ENCODE measurements at regions of chr10 and their contacts with region 1.

Region 1: DNA sequence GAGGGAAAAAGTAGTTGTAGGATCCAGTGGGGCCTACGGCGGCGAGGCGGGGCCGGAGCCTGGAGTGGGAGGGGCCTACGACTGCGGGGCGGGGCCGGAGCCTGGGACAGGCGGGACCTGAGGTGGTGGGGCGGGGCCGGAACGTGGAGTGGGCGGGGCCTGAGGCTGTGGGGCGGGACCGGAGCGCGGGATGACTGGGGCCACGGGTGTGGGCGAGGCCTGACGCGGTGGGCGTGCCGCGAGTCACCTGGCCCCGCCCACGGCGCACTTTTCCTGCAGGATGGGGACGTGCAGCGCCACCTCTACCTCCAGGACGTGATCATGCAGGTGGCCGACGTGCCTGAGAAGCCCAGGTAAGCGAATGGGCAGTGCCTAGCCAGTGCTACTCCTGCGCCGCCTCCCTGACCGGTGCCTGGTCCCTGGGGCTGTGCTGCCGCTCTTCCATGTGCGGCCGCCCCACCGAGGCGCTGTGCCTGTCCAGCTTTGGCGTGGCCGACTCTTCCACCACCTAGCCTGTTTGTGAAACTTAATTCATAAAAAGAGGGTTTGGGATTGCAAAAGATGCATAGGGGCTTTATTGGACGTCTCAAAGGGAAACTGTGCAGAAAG is 501 bp downstream of the ZNF511 start:
- DNase-seq: peak; percentile 93 to 99
- ATAC-seq: peak; percentile 97
- H3K4me3 ChIP-seq: peak overlapping the region; percentile 65 to 86
- H3K27ac ChIP-seq: peak overlapping the region in 1 of 2 donors; percentile 76
- H3K4me1 ChIP-seq: no peaks in the 10 kb centered on the region
- H3K27me3 ChIP-seq: no peaks in the 10 kb centered on the region

Region 2: GRCh38 chr10:133261726-133262325 is 47.4 kb before region 1 on chr10:
- intact Hi-C with region 1: loop called in 1 of 2 experiments (anchors 2 kb)
- DNase-seq: peak; percentile 95 to 97
- ATAC-seq: peak; percentile 82
- H3K4me3 ChIP-seq: peak overlapping the region; percentile 32 to 66
- H3K27ac ChIP-seq: no peak overlapping the region
- H3K4me1 ChIP-seq: no peaks in the 10 kb centered on the region
- H3K27me3 ChIP-seq: no peaks in the 10 kb centered on the region

Region 3: DNA sequence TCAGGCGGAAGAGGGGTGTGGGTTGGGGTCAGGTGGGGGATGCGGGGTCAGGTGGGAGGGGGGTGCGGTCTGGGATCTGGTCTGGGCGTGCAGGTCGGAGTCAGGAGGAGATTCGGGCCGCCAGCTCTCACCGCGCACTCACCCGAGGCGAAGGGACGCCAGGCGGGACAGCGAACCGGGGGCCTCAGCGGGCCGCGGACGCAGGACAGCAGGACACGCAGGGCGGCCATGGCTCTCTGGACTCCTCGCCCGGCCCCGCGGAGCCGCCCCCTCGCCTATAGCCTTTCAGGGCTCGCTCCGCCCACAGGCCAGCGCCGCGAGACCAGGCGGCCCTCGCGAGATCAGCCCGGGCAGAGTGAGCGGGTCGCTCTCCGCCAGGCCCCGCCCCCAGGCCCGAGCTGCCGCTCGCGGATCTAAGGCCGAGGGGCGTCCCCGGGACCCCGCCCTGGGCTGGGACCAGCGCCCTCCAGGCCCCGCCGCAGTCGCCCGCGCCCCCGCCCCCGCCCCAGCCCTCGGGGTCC is 63.9 kb after region 1 on chr10 and contains the start of gene ECHS1:
- intact Hi-C with region 1: loop called (anchors 5 kb)
- DNase-seq: peak; percentile 98 to 99
- ATAC-seq: peak; percentile 99
- H3K4me3 ChIP-seq: peak within 1 kb of the TSS; percentile 87 to 88
- H3K27ac ChIP-seq: peak within 1 kb of the TSS in 1 of 2 donors; percentile 61
- H3K4me1 ChIP-seq: no peaks in the 10 kb centered on the region
- H3K27me3 ChIP-seq: no peaks in the 10 kb centered on the region
- total RNA-seq, gene ECHS1: 34.3 to 48.9 TPM

Region 4: DNA sequence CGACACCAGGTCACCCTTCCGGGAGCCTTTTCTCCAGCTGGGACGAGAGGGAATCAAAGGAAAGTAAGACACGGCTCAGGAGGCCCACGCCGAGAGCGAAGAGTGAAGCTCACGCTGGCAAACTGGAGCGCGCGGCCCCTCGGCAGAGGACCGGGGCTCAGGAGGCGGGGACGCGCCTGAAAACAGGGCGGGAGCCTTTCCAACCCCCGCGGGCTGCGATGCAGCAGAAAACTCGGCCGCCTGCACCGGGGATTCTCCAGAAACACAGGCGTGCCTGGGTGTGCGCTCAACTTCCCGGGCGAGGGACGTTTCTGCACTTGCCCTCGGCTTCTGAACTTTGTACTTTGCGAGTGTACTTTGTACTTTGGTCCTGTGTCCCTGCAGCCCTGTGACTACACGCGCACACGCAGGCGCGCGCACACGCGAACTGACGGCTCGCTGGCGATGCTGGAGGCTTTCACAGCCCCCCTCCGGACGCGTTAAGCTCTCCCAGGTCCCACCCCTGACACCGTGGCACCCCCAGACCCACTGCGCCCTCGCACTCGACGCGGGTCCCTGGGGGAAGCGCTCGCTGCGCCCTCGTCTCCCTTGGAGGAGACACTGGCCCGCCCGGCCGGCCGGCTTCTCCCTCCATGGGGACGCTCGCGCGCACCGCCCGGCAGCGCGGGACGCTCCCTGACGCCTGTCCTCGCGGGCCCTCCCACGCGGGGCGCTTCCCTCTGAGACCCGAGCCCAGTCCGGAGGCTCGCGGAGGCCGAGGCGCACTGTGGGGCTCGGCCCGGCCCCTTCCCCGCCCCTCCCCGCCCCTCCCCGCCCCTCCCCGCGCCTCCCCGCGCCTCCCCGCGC is 69.3 kb after region 1 on chr10:
- intact Hi-C with region 1: loop called (anchors 5 kb)
- DNase-seq: peak; percentile 86 to 90
- ATAC-seq: peak; percentile 87
- H3K4me3 ChIP-seq: peak overlapping the region; percentile 27 to 72
- H3K27ac ChIP-seq: peak overlapping the region in 1 of 2 donors; percentile 1
- H3K4me1 ChIP-seq: no peaks in the 10 kb centered on the region
- H3K27me3 ChIP-seq: no peaks in the 10 kb centered on the region